ENCODE measurements at regions of chr10 and their contacts with region 1.

Region 1: GRCh38 chr10:71748671-71749191 is 24.6 kb downstream of the VSIR start:
- DNase-seq: peak; percentile 90
- H3K4me3 Mint-ChIP-seq: peak overlapping the region; percentile 64
- H3K27ac Mint-ChIP-seq: peak overlapping the region; percentile 98
- H3K4me1 Mint-ChIP-seq: peaks cover 94% of the 10 kb centered on the region
- H3K27me3 Mint-ChIP-seq: no peaks in the 10 kb centered on the region

Region 2: GRCh38 chr10:71735709-71736569 is 12.8 kb before region 1 on chr10:
- CTCF ChIA-PET with region 1: interaction called, 8 read pairs
- intact Hi-C with region 1: loop called (anchors 1 kb)
- DNase-seq: peak; percentile 79
- H3K4me3 Mint-ChIP-seq: peak overlapping the region; percentile 57
- H3K27ac Mint-ChIP-seq: peak overlapping the region; percentile 98
- H3K4me1 Mint-ChIP-seq: peaks cover 99% of the 10 kb centered on the region
- H3K27me3 Mint-ChIP-seq: no peaks in the 10 kb centered on the region

Region 3: DNA sequence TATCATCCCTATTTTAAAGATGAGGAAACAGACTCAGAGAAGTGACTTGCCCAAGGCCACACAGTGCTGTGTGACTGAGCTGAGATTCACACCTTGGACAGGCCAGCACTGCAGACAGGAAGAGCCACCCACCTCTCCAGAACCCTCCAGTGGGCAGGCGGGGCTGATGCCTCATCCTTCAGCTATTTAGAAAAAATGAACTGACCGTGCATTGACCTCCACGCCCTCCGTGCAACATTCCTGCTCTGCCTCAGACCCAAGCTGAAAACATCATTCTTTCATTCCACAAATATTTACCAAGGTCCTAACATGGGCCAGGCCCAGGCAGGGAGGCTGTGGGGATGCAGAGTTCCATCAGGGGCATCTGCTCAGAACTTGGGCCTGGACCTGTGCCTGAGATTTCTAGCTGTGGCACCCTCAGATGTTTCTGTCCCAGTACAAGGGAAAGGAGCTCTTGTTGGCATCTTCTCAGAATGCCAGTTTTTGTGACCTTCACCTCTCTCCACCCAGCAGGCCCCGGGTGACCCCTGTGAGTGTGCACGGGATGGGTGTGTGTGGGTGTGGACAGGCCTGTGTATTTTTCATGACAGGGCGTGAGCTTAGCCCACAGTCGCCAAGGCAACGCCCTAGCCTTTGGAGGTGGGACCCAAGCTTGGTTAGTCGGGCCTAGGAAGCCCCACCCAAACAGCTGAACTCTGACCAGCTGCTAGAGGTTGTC is 18.1 kb after region 1 on chr10:
- CTCF ChIA-PET with region 1: interaction called, 47 read pairs
- intact Hi-C with region 1: loop called (anchors 1 kb)
- DNase-seq: no peak
- H3K4me3 Mint-ChIP-seq: peak overlapping the region; percentile 52
- H3K27ac Mint-ChIP-seq: peak overlapping the region; percentile 98
- H3K4me1 Mint-ChIP-seq: peaks cover 89% of the 10 kb centered on the region
- H3K27me3 Mint-ChIP-seq: no peaks in the 10 kb centered on the region

Region 4: GRCh38 chr10:71782917-71783490 is 34.3 kb after region 1 on chr10:
- CTCF ChIA-PET with region 1: no interaction called
- intact Hi-C with region 1: no loop called
- DNase-seq: no peak
- H3K4me3 Mint-ChIP-seq: no peak overlapping the region
- H3K27ac Mint-ChIP-seq: no peak overlapping the region
- H3K4me1 Mint-ChIP-seq: peaks cover 5% of the 10 kb centered on the region
- H3K27me3 Mint-ChIP-seq: no peaks in the 10 kb centered on the region

Measured in activated naive CD4-positive, alpha-beta T cell treated with anti-CD3 and anti-CD28 coated beads for 36 hours (primary cell).